ENCODE measurements at regions of chr19 and their contacts with region 1.

Region 1: GRCh38 chr19:33156334-33156733 is 24.4 kb downstream of the WDR88 start:
- DNase-seq: no peak
- H3K4me3 ChIP-seq: no peak overlapping the region
- H3K27ac ChIP-seq: no peak overlapping the region
- H3K4me1 ChIP-seq: peaks cover 2 to 38% (median 24%) of the 10 kb centered on the region in 4 experiments
- H3K27me3 ChIP-seq: no peaks in the 10 kb centered on the region

Region 2: GRCh38 chr19:33143897-33144405 is 12.4 kb before region 1 on chr19:
- CTCF ChIA-PET with region 1: interaction called, 10 read pairs
- POLR2A ChIA-PET with region 1: interaction called, 3 read pairs
- DNase-seq: peak; percentile 64 to 74 (median 73)
- H3K4me3 ChIP-seq: peak overlapping the region in 1 of 7 experiments; percentile 42
- H3K27ac ChIP-seq: no peak overlapping the region
- H3K4me1 ChIP-seq: peaks cover 0 to 4% (median 0%) of the 10 kb centered on the region in 4 experiments
- H3K27me3 ChIP-seq: peaks cover 0 to 1% (median 0%) of the 10 kb centered on the region in 5 experiments

Region 3: DNA sequence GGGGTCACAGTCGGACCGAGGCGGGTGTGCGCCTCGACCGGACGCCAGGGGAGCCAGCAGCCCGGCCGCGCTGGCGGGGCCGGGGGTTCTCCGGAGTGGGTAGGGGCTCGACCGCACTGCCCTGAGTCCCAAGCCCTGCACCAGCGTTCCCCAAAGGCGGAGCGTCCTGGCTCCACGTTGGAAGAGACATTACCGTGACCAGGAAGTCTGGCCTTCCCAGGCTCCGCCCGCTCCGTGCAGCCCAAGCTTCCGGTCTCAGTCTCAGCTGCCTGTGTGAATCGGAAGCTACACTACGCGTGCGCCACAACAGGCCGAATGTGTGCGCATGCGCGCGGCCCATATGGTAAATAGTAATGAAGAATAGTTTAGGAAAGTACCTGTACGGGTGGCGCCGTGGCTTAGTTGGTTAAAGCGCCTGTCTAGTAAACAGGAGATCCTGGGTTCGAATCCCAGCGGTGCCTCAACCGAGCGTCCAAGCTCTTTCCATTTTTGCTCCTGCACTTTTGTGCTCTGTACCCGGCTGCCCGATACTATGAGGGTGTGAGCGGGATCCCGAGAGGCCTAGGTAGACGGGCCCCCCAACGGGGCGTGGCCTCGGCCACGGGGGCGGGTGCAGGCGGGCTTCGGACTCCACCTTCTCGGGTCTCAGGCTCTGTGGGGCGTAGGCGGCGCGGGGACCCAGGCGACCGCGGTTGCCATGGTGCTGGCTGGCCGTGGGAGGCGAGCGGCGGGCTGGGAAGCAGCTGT is 20.5 kb after region 1 on chr19:
- CTCF ChIA-PET with region 1: interaction called, 47 read pairs
- POLR2A ChIA-PET with region 1: interaction called, 7 read pairs
- DNase-seq: peak; percentile 92 to 97 (median 96)
- H3K4me3 ChIP-seq: peak overlapping the region; percentile 83 to 96 (median 93)
- H3K27ac ChIP-seq: peak overlapping the region; percentile 74 to 90
- H3K4me1 ChIP-seq: peaks cover 10 to 33% (median 21%) of the 10 kb centered on the region in 4 experiments
- H3K27me3 ChIP-seq: no peaks in the 10 kb centered on the region

Region 4: GRCh38 chr19:33186431-33187182 is 30.3 kb after region 1 on chr19:
- CTCF ChIA-PET with region 1: interaction called, 10 read pairs
- POLR2A ChIA-PET with region 1: no interaction called
- DNase-seq: peak; percentile 34 to 51 (median 51)
- H3K4me3 ChIP-seq: peak overlapping the region in 3 of 7 experiments; percentile 13 to 40 (median 28)
- H3K27ac ChIP-seq: no peak overlapping the region
- H3K4me1 ChIP-seq: peaks cover 0 to 20% (median 10%) of the 10 kb centered on the region in 4 experiments
- H3K27me3 ChIP-seq: peaks cover 0 to 4% (median 0%) of the 10 kb centered on the region in 5 experiments

Region 5: DNA sequence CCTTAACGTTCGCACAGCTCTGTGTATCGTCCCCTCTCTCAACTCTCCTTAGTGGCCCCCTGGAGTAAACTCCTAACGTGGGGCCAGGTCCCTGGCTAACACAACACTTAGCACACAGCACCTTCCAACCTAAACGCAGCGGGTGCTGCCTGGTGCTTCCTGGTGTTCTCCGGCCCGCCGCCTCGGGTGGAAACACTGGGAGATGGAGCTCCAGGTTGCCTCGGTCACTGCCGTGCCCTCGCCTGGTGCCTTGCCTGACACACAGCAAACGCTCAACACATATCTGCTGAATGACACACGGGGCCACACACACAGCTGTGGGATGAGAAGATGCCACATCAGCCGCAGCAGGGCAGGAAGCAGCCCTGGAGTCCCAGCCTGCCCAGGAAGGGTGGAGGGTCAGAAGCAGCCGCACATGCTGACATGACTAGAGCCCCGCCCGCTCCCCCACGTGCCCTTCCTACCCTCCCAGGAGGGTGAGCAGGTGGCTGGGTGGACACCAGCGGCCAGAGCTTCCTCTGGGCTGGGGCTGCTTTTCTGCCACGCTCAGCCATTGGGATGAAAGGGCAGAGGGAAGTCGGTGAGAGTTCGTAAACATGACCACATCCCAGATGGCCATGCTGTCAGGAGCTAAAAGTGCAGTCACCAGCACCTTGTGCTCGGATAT is 358.7 kb after region 1 on chr19:
- CTCF ChIA-PET with region 1: no interaction called
- POLR2A ChIA-PET with region 1: no interaction called
- DNase-seq: peak in 2 of 3 donors; percentile 25 to 46
- H3K4me3 ChIP-seq: no peak overlapping the region
- H3K27ac ChIP-seq: no peak overlapping the region
- H3K4me1 ChIP-seq: peaks cover 0 to 5% (median 0%) of the 10 kb centered on the region in 4 experiments
- H3K27me3 ChIP-seq: no peaks in the 10 kb centered on the region

Measured in common myeloid progenitor, CD34-positive (primary cell).